Caco-2 (cell line): ENCODE measurements at regions of chr4 and their contacts with region 1.

Region 1: GRCh38 chr4:2418650-2419571 is at the start of gene CFAP99:
- DNase-seq: peak; percentile 95 to 96
- H3K4me3 ChIP-seq: peak within 1 kb of the TSS; percentile 51
- H3K4me3 Mint-ChIP-seq: peak within 1 kb of the TSS; percentile 90
- H3K27ac Mint-ChIP-seq: peak within 1 kb of the TSS; percentile 83
- H3K4me1 ChIP-seq: peaks cover 14% of the 10 kb centered on the region
- H3K4me1 Mint-ChIP-seq: peaks cover 14% of the 10 kb centered on the region
- H3K27me3 ChIP-seq: no peaks in the 10 kb centered on the region; the same call in none of the 2 replicates
- H3K27me3 Mint-ChIP-seq: peaks cover 29% of the 10 kb centered on the region
- CTCF ChIP-seq: no peak
- total RNA-seq, gene CFAP99: not detected in 2 replicates

Region 2: GRCh38 chr4:2024683-2025082 is 394.2 kb before region 1 on chr4:
- CTCF ChIA-PET with region 1: no interaction called
- POLR2A ChIA-PET with region 1: no interaction called
- intact Hi-C with region 1: no loop called
- DNase-seq: no peak
- H3K4me3 ChIP-seq: no peak overlapping the region
- H3K4me3 Mint-ChIP-seq: no peak overlapping the region
- H3K27ac Mint-ChIP-seq: no peak overlapping the region
- H3K4me1 ChIP-seq: peaks cover 5% of the 10 kb centered on the region; the same call in 1 of the 2 replicates
- H3K4me1 Mint-ChIP-seq: peaks cover 9% of the 10 kb centered on the region
- H3K27me3 ChIP-seq: no peaks in the 10 kb centered on the region
- H3K27me3 Mint-ChIP-seq: no peaks in the 10 kb centered on the region
- CTCF ChIP-seq: no peak

Region 3: GRCh38 chr4:2220016-2220630 is 198.8 kb before region 1 on chr4:
- CTCF ChIA-PET with region 1: no interaction called
- POLR2A ChIA-PET with region 1: no interaction called
- intact Hi-C with region 1: loop called (anchors 5 kb)
- DNase-seq: peak; percentile 69 to 79
- H3K4me3 ChIP-seq: no peak overlapping the region
- H3K4me3 Mint-ChIP-seq: no peak overlapping the region
- H3K27ac Mint-ChIP-seq: no peak overlapping the region
- H3K4me1 ChIP-seq: no peaks in the 10 kb centered on the region
- H3K4me1 Mint-ChIP-seq: peaks cover 9% of the 10 kb centered on the region
- H3K27me3 ChIP-seq: no peaks in the 10 kb centered on the region
- H3K27me3 Mint-ChIP-seq: no peaks in the 10 kb centered on the region
- CTCF ChIP-seq: peak; percentile 78 to 88

Region 4: GRCh38 chr4:2241410-2242353 is 177.2 kb before region 1 on chr4 and contains the starts of genes HAUS3 and POLN:
- CTCF ChIA-PET with region 1: no interaction called
- POLR2A ChIA-PET with region 1: no interaction called
- intact Hi-C with region 1: loop called (anchors 2 kb)
- DNase-seq: peak; percentile 97 to 98
- H3K4me3 ChIP-seq: peak within 1 kb of the TSS; percentile 90
- H3K4me3 Mint-ChIP-seq: peak within 1 kb of the TSS; percentile 77
- H3K27ac Mint-ChIP-seq: peak within 1 kb of the TSS; percentile 4
- H3K4me1 ChIP-seq: peaks cover 14% of the 10 kb centered on the region; the same call in 1 of the 2 replicates
- H3K4me1 Mint-ChIP-seq: peaks cover 23% of the 10 kb centered on the region
- H3K27me3 ChIP-seq: no peaks in the 10 kb centered on the region
- H3K27me3 Mint-ChIP-seq: no peaks in the 10 kb centered on the region
- CTCF ChIP-seq: no peak
- total RNA-seq, gene HAUS3: 17.7 and 17.9 TPM in 2 replicates
- total RNA-seq, gene POLN: 1.2 and 1.6 TPM in 2 replicates

Region 5: GRCh38 chr4:2262143-2262943 is 156.6 kb before region 1 on chr4:
- CTCF ChIA-PET with region 1: interaction called, 6 read pairs
- POLR2A ChIA-PET with region 1: no interaction called
- intact Hi-C with region 1: loop called (anchors 1 kb)
- DNase-seq: peak; percentile 98
- H3K4me3 ChIP-seq: peak overlapping the region; percentile 63
- H3K4me3 Mint-ChIP-seq: peak overlapping the region; percentile 72
- H3K27ac Mint-ChIP-seq: no peak overlapping the region
- H3K4me1 ChIP-seq: 0 out of 2 replicates have a peak, but pooled peaks cover 5% of the 10 kb centered on the region
- H3K4me1 Mint-ChIP-seq: no peaks in the 10 kb centered on the region
- H3K27me3 ChIP-seq: no peaks in the 10 kb centered on the region
- H3K27me3 Mint-ChIP-seq: no peaks in the 10 kb centered on the region
- CTCF ChIP-seq: no peak

Region 6: DNA sequence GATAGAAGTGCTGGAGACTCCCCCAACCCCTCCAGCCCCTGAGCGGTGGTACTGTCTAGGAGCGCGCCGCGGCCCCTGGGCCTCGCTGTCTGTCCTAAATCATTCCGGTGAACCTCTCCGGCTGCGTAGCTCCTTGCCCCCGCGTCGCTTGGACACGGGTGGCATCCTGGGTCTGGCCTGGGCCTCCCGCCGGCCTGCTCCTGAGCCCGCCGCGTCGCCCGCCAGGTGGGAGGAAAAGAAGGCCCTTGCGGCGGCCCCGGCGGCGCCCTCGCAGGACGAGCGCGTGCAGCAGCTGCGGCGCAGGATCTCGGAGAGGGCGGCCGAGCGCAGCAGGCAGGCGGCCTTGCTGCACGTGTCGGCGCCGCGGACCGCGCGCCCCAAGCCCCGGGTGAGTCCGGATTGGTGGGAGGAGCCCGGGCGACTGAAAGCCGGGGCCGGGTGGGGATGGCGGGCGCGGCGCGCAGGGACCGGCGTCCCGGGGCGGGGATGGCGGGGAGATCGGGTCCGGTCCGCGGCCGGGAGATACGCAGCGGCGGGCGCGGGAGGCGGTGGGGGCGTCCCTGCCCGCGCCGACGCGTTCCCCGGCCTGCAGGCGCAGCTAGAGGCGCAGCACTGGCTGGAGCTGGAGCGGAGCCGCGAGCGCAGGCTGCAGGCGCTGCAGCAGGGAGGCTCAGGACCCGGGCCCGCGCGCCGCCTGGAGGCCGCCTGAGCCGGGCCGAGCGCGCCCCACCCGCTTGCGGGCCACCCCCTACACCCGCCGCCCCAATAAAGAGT is 43.5 kb after region 1 on chr4:
- CTCF ChIA-PET with region 1: interaction called, 5 read pairs
- POLR2A ChIA-PET with region 1: no interaction called
- intact Hi-C with region 1: loop called (anchors 5 kb)
- DNase-seq: peak in 1 of 2 experiments; percentile 84
- H3K4me3 ChIP-seq: peak overlapping the region; percentile 33
- H3K4me3 Mint-ChIP-seq: peak overlapping the region; percentile 70
- H3K27ac Mint-ChIP-seq: peak overlapping the region; percentile 39
- H3K4me1 ChIP-seq: peaks cover 3% of the 10 kb centered on the region; the same call in 1 of the 2 replicates
- H3K4me1 Mint-ChIP-seq: peaks cover 8% of the 10 kb centered on the region
- H3K27me3 ChIP-seq: no peaks in the 10 kb centered on the region
- H3K27me3 Mint-ChIP-seq: no peaks in the 10 kb centered on the region
- CTCF ChIP-seq: peak; percentile 26 to 54

Region 7: DNA sequence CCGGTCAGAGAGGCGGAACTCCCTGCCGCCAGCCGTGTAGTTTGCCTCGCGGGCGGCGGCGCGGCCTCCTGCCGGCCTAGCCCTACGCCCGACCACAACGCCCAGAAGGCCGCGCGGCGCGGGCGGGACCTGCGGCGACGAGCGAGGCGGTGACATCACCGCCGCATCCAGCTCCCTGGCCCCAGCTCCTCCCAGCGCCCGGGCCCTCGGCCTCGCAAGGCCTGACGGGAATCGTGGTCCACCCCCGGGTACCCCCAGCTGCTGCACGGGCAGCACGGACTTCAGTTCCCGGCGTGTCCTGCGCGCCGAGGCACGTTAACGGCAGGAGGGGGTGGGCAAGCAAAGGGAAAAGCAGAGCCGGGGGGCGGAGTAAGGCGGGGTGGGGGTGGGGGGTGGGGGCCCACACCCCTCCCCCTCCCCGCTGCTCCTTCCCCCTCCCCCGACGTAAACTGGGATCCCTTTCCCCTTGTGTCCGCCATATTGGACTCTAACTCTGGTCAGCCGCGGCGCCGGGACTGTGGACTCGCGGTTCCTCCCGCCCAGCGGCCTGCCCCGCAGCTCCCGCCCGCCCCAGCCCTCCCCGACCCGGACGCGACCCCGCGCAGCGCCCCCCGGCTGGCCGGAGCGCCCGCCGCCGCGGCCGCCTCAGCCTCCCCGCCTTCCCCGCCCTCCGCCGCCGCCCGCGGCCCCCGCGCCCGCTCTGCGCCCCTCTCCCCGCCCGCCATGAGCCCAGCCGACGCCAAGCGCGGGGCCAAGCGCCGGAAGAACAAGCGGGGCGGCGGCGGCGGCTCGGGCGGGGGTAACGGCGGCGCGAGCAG is 117.5 kb after region 1 on chr4 and contains the start of gene FAM193A:
- CTCF ChIA-PET with region 1: no interaction called
- POLR2A ChIA-PET with region 1: no interaction called
- intact Hi-C with region 1: loop called (anchors 5 kb)
- DNase-seq: peak; percentile 99
- H3K4me3 ChIP-seq: peak within 1 kb of the TSS; percentile 92
- H3K4me3 Mint-ChIP-seq: peak within 1 kb of the TSS; percentile 88
- H3K27ac Mint-ChIP-seq: peak within 1 kb of the TSS; percentile 88
- H3K4me1 ChIP-seq: no peaks in the 10 kb centered on the region
- H3K4me1 Mint-ChIP-seq: no peaks in the 10 kb centered on the region
- H3K27me3 ChIP-seq: no peaks in the 10 kb centered on the region
- H3K27me3 Mint-ChIP-seq: no peaks in the 10 kb centered on the region
- CTCF ChIP-seq: no peak
- total RNA-seq, gene FAM193A: 28.7 and 31.2 TPM in 2 replicates

Region 8: GRCh38 chr4:2570551-2571222 is 151.8 kb after region 1 on chr4:
- CTCF ChIA-PET with region 1: no interaction called
- POLR2A ChIA-PET with region 1: no interaction called
- intact Hi-C with region 1: no loop called
- DNase-seq: no peak
- H3K4me3 ChIP-seq: no peak overlapping the region
- H3K4me3 Mint-ChIP-seq: no peak overlapping the region
- H3K27ac Mint-ChIP-seq: no peak overlapping the region
- H3K4me1 ChIP-seq: no peaks in the 10 kb centered on the region
- H3K4me1 Mint-ChIP-seq: peaks cover 21% of the 10 kb centered on the region
- H3K27me3 ChIP-seq: no peaks in the 10 kb centered on the region
- H3K27me3 Mint-ChIP-seq: no peaks in the 10 kb centered on the region
- CTCF ChIP-seq: no peak

Region 9: DNA sequence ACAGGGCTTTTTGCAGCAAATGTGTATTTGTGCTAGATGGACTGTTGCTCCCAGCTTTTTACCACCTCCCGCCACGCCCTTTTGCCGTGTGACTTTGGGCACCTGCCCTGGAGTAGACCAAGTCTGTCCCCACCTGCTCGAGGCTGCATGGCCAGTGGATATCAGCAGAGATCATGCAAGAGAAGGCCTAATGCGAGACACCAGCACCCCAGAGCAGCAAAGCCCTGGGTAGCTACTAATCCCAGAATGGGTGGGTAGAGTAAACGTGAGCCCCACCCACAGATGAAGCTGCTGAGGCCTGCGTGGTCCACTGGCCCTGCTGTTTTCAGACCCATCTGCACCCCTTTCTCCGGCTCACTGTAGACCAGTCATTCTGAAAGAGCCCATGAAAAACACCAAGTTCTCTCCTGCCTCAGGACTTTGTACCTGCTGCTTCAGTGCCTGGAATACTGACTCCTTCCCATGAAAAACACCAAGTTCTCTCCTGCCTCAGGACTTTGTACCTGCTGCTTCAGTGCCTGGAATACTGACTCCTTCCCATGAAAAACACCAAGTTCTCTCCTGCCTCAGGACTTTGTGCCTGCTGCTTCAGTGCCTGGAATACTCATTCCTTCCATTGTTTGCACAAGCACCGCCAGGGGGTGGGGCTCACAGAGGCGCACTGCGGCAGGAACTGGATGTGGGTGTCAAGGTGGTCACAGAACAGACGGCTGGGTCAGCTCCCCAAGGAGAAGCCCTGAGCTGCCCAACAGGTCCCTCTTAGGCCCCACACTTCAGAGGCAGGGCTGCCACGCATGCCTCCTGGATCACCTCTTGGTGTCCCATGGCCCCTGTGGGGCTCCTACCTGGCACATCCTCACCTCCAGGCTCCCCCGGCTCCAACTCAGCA is 342.4 kb after region 1 on chr4:
- CTCF ChIA-PET with region 1: no interaction called
- POLR2A ChIA-PET with region 1: no interaction called
- intact Hi-C with region 1: no loop called
- DNase-seq: peak; percentile 42 to 79
- H3K4me3 ChIP-seq: no peak overlapping the region
- H3K4me3 Mint-ChIP-seq: no peak overlapping the region
- H3K27ac Mint-ChIP-seq: peak overlapping the region; percentile 63
- H3K4me1 ChIP-seq: peaks cover 22% of the 10 kb centered on the region
- H3K4me1 Mint-ChIP-seq: peaks cover 7% of the 10 kb centered on the region
- H3K27me3 ChIP-seq: no peaks in the 10 kb centered on the region
- H3K27me3 Mint-ChIP-seq: no peaks in the 10 kb centered on the region
- CTCF ChIP-seq: peak in 1 of 2 experiments; percentile 10